Pancreas (tissue), 10 donors: ENCODE measurements at regions of chr19 and their contacts with region 1.

Region 1: GRCh38 chr19:46392243-46392801 is 21.0 kb downstream of the CCDC8 start:
- DNase-seq: peak in 2 of 6 donors; percentile 24 to 65
- ATAC-seq: no peak
- H3K4me3 ChIP-seq: no peak overlapping the region
- H3K27ac ChIP-seq: no peak overlapping the region
- H3K4me1 ChIP-seq: no peaks in the 10 kb centered on the region
- H3K27me3 ChIP-seq: no peaks in the 10 kb centered on the region
- CTCF ChIP-seq: no peak

Region 2: GRCh38 chr19:46283771-46284170 is 108.6 kb before region 1 on chr19:
- intact Hi-C with region 1: loop called in 1 of 3 experiments (anchors 5 kb)
- DNase-seq: no peak
- ATAC-seq: no peak
- H3K4me3 ChIP-seq: no peak overlapping the region
- H3K27ac ChIP-seq: no peak overlapping the region
- H3K4me1 ChIP-seq: no peaks in the 10 kb centered on the region
- H3K27me3 ChIP-seq: no peaks in the 10 kb centered on the region
- CTCF ChIP-seq: no peak

Region 3: DNA sequence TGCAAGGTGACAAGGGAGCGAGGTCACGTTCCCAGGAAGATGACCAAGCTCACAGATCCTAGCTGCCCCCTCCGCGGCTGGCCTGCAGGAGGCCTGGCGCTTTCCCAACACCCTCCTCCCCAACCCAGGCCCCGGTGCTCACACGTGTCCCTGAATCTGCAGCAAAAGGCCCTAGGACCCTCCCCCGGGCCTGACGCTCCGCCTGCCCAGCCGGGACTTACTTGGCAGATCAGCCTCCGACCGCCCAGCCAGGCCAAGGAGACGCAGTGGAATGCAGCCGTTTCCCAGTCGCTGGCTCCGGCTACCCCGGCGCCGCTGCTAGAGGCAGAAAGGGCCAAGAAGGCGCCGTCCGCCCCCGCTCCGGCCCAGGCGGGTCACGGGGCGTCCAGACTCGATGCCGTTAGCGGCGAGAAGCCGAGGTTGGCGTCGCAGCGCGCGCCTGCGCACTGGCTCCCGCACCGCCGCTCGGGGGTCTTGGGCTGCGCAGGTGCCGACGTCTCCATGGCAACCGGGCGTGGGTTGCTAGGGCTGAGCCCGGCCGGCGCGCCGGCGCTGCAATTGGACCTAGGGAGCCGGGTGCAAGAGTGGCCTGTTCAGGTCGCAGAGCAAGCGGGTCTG is 78.9 kb after region 1 on chr19 and contains the start of gene PNMA8A:
- intact Hi-C with region 1: no loop called
- DNase-seq: peak; percentile 58 to 90 (median 74)
- ATAC-seq: peak; percentile 84 to 88 (median 86)
- H3K4me3 ChIP-seq: peak within 1 kb of the TSS; percentile 30 to 59 (median 47)
- H3K27ac ChIP-seq: peak within 1 kb of the TSS; percentile 40 to 69 (median 56)
- H3K4me1 ChIP-seq: peaks cover 0 to 5% (median 4%) of the 10 kb centered on the region in 3 donors
- H3K27me3 ChIP-seq: no peaks in the 10 kb centered on the region
- CTCF ChIP-seq: no peak
- total RNA-seq, gene PNMA8A: 2.4 to 8.0 (median 5.8) TPM